Spleen (tissue), 13 donors: ENCODE measurements at regions of chr6 and their contacts with region 1.

Region 1: DNA sequence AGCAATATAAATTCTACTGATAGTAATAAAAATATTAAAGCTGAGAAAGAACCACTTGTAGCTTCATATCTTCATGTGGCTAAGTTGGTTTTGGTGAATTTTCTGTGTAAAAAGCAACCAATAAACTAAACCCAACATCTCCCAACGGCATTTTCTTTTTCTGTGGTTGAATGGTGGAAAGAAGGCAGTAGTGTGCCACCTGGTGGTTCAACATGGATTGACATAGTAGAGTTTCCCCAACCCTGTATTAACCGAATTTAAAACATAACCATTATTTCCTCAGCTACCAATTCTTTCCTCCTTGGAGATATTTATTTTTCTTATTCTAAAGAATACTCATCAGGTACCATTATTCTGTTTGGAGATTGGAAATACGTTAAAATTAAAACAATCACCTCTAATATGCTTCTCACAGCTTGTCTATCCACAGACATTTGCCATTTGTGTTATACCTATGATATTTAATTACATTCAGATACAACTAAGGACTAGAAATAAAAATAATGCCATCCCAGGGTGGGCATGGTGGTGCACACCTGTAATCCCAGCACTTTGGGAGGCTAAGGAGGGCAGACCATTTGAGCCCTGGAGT is 117.1 kb upstream of the EEF1E1 start:
- DNase-seq: no peak
- H3K4me3 ChIP-seq: no peak overlapping the region
- H3K27ac ChIP-seq: no peak overlapping the region
- H3K4me1 ChIP-seq: no peaks in the 10 kb centered on the region
- H3K27me3 ChIP-seq: peaks cover 0 to 5% (median 0%) of the 10 kb centered on the region in 7 donors
- CTCF ChIP-seq: peak; percentile 36 to 88 (median 74)
- POLR2A ChIP-seq: no peak

Region 2: DNA sequence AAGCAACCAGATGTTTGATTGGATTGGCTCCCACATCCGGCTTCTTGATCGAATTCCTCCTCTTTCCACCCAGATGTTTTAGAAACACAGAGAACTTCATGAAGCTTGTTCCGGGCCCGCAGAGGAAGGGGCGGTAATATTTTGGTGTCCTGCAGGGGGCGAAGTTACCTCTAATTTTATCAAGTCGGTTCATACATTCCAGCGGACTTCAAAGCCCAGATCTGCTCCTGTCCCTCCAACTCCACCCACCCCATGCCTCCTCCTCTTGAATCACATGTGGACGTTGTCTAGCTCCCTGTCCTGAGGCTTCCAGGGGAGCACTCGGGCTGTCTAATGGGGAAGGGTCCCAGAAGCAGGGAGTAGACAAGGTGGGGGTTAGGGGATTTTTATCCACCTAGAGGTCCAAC is 496.4 kb before region 1 on chr6:
- intact Hi-C with region 1: loop called (anchors 5 kb)
- DNase-seq: peak; percentile 86
- H3K4me3 ChIP-seq: no peak overlapping the region
- H3K27ac ChIP-seq: no peak overlapping the region
- H3K4me1 ChIP-seq: peaks cover 17 to 46% (median 34%) of the 10 kb centered on the region in 6 donors
- H3K27me3 ChIP-seq: peaks cover 4 to 65% (median 30%) of the 10 kb centered on the region in 7 donors
- CTCF ChIP-seq: peak; percentile 41 to 76 (median 68)
- POLR2A ChIP-seq: no peak

Region 3: GRCh38 chr6:8054276-8054675 is 165.2 kb before region 1 on chr6:
- intact Hi-C with region 1: no loop called
- DNase-seq: no peak
- H3K4me3 ChIP-seq: no peak overlapping the region
- H3K27ac ChIP-seq: no peak overlapping the region
- H3K4me1 ChIP-seq: peaks cover 0 to 4% (median 0%) of the 10 kb centered on the region in 6 donors
- H3K27me3 ChIP-seq: no peaks in the 10 kb centered on the region
- CTCF ChIP-seq: no peak
- POLR2A ChIP-seq: no peak

Region 4: DNA sequence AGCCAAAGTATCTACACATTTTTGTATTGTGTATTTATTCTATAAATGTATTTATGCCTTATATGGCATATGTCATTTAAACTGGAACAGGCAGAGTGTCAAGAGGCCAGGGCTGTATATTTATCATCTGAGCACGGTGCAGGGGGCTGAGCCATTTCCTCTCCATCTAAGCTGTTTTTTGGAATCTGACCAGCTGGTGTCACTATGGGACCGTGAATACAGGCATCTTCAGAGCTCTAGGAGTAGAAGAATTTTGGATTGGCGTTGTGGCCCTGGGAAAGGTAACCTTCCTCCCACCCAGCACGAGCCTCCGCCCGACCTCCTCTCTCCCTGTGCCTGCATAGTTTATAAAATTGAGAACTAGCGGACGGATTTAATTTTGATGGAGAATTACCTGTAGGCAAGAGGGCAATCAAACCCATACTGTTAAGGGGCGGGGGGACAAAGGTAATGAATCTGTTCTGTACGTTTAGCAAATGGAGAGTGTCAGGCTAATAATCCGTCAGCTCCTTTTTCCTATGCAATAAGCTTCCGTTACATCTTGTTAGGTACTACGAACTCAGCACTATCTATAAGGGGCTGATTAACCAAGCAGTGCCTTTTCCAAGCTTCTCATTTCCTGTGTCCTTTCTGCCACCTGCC is 88.1 kb before region 1 on chr6:
- intact Hi-C with region 1: loop called (anchors 5 kb)
- DNase-seq: no peak
- H3K4me3 ChIP-seq: no peak overlapping the region
- H3K27ac ChIP-seq: no peak overlapping the region
- H3K4me1 ChIP-seq: peaks cover 0 to 3% (median 0%) of the 10 kb centered on the region in 6 donors
- H3K27me3 ChIP-seq: peaks cover 0 to 37% (median 0%) of the 10 kb centered on the region in 7 donors
- CTCF ChIP-seq: peak in 8 of 11 experiments; percentile 21 to 63 (median 40)
- POLR2A ChIP-seq: no peak